ENCODE measurements at regions of chr4 and their contacts with region 1.

Region 1: DNA sequence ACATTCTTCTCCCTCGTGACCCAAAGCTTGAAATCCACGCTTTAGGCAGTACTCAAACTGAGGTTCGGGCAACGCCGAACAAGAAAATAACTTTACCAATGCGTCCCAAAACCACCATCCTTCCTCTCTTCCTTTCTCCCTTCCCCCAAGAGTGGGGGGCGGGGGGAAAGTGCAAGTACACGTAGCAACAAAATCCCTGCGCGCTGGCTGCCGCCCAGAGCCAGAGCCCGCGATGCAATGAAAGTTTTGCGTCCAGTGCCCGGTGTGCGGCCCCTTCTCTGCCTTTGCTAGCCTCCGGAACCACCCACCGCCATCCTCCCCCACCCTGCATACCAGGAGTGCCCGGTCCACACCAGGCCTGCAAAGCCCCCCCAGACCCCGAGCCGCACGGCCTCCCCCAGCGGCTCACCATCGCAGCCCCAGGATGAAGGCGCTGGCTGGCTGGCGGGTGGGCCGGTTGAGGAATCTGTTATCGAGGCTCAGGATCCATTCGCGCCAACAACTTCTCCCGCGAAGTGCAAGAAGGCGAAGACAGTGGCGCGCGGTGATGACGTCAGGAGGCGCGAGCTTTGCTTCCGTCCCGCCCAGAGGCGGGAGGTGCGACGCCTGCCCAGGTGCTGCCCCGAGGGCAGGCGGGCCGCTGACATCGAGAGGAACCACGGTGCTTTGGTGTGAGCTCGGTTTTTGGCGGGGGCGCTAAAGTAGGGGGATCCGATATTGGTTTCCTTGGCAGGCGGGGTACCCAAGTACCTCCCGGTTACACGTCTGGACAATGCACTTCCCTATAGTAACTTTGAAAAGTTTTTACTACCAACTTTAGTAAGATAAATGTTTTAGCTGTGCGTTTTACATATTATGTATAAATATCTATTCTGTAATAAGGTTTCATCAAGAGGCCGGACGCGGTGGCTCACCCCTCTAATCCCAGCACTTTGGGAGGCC is at the start of gene RFC1:
- DNase-seq: peak; percentile 84 to 92 (median 91)
- ATAC-seq: peak; percentile 98
- H3K4me3 ChIP-seq: peak within 1 kb of the TSS; percentile 69
- H3K4me3 Mint-ChIP-seq: peak within 1 kb of the TSS; percentile 88 to 98 (median 94)
- H3K27ac ChIP-seq: peak within 1 kb of the TSS; percentile 84
- H3K27ac Mint-ChIP-seq: peak within 1 kb of the TSS; percentile 72 to 97 (median 92)
- H3K4me1 ChIP-seq: peaks cover 12 to 19% of the 10 kb centered on the region in 2 donors
- H3K4me1 Mint-ChIP-seq: peaks cover 33 to 59% (median 41%) of the 10 kb centered on the region in 7 donors
- H3K27me3 ChIP-seq: no peaks in the 10 kb centered on the region
- H3K27me3 Mint-ChIP-seq: no peaks in the 10 kb centered on the region
- total RNA-seq, gene RFC1: 62.4 to 66.4 (median 64.3) TPM

Region 2: DNA sequence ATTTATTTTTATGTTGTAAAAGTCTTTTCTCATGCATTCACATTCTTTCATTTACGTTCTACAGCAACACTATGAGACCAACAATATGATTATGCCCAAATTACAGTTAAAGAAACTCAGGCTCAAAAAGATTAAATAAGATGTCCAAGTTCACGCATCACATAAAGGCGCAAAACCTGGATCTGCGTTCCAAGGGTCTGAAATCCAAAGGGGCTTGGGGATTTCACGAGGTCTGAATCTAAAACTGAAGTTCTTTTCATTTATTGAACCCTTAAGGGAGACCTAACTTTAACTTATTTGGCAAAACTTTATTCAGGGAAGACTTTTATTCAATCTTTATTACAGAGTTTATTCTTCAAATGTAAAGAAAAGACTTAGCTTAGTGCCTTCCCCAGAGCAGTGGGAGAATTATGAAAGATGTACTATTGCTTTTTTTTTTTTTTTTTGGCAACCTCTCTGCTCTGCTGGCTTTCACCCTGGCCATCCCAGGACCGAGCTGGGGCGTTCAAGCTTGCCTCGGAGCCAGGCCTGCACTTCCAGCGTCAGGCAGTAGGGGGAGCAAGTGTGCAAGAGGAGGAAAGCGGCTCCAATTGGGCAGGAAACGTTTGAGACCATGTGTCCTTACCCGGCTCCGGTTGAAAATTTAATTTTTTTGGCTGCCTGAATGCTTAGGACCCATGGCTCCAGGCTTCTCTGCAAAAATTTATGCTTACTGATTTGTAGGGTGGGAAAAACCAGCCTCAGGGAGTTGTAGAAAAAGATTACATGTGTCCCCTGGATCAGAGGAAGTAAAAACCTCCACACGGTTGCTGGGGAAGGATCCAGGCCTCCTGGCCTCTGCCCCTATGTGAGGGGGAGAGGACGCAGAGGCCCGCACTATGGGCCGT is 1046.4 kb before region 1 on chr4:
- CTCF ChIA-PET with region 1: no interaction called
- POLR2A ChIA-PET with region 1: no interaction called
- intact Hi-C with region 1: loop called in 1 of 2 experiments (anchors 10 kb)
- DNase-seq: peak; percentile 73 to 96 (median 83)
- ATAC-seq: peak; percentile 91
- H3K4me3 ChIP-seq: peak overlapping the region; percentile 38
- H3K4me3 Mint-ChIP-seq: peak overlapping the region; percentile 80 to 95 (median 88)
- H3K27ac ChIP-seq: peak overlapping the region; percentile 68
- H3K27ac Mint-ChIP-seq: peak overlapping the region; percentile 87 to 98 (median 94)
- H3K4me1 ChIP-seq: peaks cover 19 to 35% of the 10 kb centered on the region in 2 donors
- H3K4me1 Mint-ChIP-seq: peaks cover 33 to 75% (median 70%) of the 10 kb centered on the region in 7 donors
- H3K27me3 ChIP-seq: no peaks in the 10 kb centered on the region
- H3K27me3 Mint-ChIP-seq: peaks cover 0 to 10% (median 0%) of the 10 kb centered on the region in 5 donors

Region 3: GRCh38 chr4:39319678-39320077 is 46.4 kb before region 1 on chr4:
- CTCF ChIA-PET with region 1: no interaction called
- POLR2A ChIA-PET with region 1: interaction called, 4 read pairs
- intact Hi-C with region 1: loop called in 1 of 2 experiments (anchors 10 kb)
- DNase-seq: no peak
- ATAC-seq: no peak
- H3K4me3 ChIP-seq: no peak overlapping the region
- H3K4me3 Mint-ChIP-seq: no peak overlapping the region
- H3K27ac ChIP-seq: no peak overlapping the region
- H3K27ac Mint-ChIP-seq: no peak overlapping the region
- H3K4me1 ChIP-seq: no peaks in the 10 kb centered on the region
- H3K4me1 Mint-ChIP-seq: no peaks in the 10 kb centered on the region
- H3K27me3 ChIP-seq: no peaks in the 10 kb centered on the region
- H3K27me3 Mint-ChIP-seq: no peaks in the 10 kb centered on the region

Region 4: DNA sequence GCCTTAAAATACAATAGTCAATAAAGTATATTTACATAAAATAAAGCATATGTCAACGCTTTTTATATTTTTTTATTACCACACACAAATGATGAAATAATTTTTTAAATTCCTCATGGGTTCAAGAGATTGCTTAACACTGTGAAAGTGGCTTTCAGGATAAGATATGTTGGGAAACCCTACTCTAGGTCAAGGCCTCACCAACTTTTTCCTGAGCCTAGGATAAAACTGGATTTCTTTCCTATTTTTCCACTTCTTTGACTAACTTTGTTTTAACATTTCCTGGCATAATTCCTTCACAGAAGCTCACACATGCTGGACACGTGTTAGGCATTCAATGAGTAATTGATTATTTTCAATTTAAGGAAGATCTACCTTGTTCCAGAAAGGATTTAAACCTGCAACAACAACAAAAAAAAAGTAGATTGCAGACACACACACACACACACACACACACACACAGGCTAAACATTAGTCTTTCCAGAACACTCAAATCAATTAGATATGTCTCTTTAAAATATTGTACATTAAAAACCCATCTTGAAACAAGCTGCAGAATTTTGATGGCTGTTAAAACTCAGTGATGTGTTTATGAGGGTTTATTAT is 49.7 kb after region 1 on chr4:
- CTCF ChIA-PET with region 1: no interaction called
- POLR2A ChIA-PET with region 1: no interaction called
- intact Hi-C with region 1: no loop called
- DNase-seq: no peak
- ATAC-seq: no peak
- H3K4me3 ChIP-seq: no peak overlapping the region
- H3K4me3 Mint-ChIP-seq: no peak overlapping the region
- H3K27ac ChIP-seq: no peak overlapping the region
- H3K27ac Mint-ChIP-seq: no peak overlapping the region
- H3K4me1 ChIP-seq: no peaks in the 10 kb centered on the region
- H3K4me1 Mint-ChIP-seq: no peaks in the 10 kb centered on the region
- H3K27me3 ChIP-seq: peaks cover 0 to 2% of the 10 kb centered on the region in 2 donors
- H3K27me3 Mint-ChIP-seq: peaks cover 0 to 9% (median 0%) of the 10 kb centered on the region in 5 donors

Region 5: DNA sequence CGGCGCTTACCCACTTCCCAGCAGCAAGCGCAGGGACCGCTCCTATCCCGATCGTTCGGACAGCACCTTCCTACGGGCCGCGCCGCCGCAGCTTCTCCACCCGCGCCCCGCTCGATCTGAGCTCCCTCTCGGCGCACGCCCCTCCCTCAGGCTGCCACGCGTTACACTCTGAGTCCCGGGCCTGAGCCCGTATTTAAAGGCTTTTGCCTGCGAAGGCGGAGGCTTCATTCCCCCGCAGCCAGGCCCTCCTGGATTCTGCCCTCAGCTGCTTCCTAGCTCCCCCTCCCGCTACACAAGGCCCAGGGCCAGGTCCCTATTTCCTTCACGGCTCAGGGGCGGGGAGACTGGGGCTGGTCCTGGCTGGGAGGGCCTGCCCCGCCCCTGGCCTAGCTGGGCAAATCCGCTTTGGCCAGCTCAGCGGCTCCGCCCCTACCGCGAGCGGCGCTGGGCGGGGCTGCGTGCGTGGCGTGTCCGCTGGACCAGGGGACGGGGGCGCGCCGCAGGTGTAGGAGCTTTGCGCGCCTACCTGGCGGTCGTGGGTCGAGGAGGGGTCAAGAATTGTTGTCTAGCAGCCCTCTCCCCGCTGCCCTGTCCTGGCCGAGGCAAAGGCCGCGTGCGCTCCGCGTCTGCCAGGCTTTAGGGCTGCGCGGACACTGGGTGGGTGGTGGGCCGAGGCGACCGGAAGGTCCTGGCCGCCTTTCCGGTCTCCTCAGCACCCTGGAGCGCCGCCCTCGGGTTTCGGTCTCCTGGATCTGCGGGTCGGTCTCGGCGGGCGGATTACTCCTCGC is 161.4 kb after region 1 on chr4 and contains the start of gene UGDH:
- CTCF ChIA-PET with region 1: no interaction called
- POLR2A ChIA-PET with region 1: no interaction called
- intact Hi-C with region 1: loop called (anchors 5 to 10 kb)
- DNase-seq: peak; percentile 85 to 95 (median 88)
- ATAC-seq: peak; percentile 99
- H3K4me3 ChIP-seq: peak within 1 kb of the TSS; percentile 81
- H3K4me3 Mint-ChIP-seq: peak within 1 kb of the TSS; percentile 88 to 99 (median 98)
- H3K27ac ChIP-seq: peak within 1 kb of the TSS; percentile 74
- H3K27ac Mint-ChIP-seq: peak within 1 kb of the TSS; percentile 84 to 97 (median 93)
- H3K4me1 ChIP-seq: peaks cover 7 to 10% of the 10 kb centered on the region in 2 donors
- H3K4me1 Mint-ChIP-seq: peaks cover 11 to 26% (median 19%) of the 10 kb centered on the region in 7 donors
- H3K27me3 ChIP-seq: no peaks in the 10 kb centered on the region
- H3K27me3 Mint-ChIP-seq: no peaks in the 10 kb centered on the region
- total RNA-seq, gene UGDH: 6.9 to 20.9 (median 17.7) TPM

Region 6: DNA sequence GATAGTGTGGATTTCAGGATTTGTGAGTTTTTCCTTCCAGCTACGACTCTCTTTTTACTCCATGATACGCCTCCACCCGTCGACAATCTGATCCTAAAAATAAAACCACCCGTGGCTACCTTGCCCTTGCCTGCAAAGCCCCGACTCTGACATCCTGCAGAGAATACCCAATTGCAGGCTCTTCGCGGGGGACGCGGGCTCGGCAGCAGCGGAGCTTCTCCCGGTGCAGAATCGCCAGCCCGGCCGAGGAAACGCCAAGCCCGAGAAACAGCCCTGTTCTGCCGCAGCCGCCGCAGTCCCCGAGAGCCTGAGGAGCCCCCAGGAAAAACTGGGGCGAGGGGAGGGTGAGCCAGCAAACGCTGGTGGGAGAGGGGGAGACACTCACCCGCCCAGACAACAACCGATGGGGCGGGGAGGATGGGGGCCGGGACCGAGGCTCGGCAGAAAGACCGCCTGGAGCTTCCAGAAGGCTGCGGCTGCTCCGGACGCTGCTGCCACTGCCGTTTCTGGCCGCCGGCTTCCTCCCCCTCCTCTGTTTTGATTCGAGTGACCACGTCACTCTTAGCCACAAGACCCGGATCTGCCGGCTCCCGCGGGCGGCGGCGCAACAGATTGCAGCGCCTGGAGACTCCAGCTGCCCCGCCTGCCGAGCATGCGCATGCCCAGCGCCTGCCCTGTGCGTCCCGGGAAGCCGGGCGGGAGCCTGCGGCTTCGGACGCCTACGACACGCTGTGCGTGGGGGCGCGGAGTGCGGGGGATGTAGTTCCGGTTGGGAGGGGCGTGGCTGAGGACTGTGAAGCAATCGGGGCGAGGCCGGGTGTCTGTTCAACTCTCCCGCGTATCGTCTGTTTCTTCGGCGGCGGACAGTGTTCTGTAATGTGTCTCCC is 272.5 kb after region 1 on chr4 and contains the start of gene SMIM14:
- CTCF ChIA-PET with region 1: no interaction called
- POLR2A ChIA-PET with region 1: no interaction called
- intact Hi-C with region 1: loop called in 1 of 2 experiments (anchors 5 kb)
- DNase-seq: peak; percentile 69 to 96 (median 82)
- ATAC-seq: peak; percentile 92
- H3K4me3 ChIP-seq: peak within 1 kb of the TSS; percentile 77
- H3K4me3 Mint-ChIP-seq: peak within 1 kb of the TSS; percentile 86 to 97 (median 94)
- H3K27ac ChIP-seq: peak within 1 kb of the TSS; percentile 79
- H3K27ac Mint-ChIP-seq: peak within 1 kb of the TSS; percentile 67 to 96 (median 86)
- H3K4me1 ChIP-seq: peaks cover 12 to 13% of the 10 kb centered on the region in 2 donors
- H3K4me1 Mint-ChIP-seq: peaks cover 22 to 51% (median 44%) of the 10 kb centered on the region in 7 donors
- H3K27me3 ChIP-seq: no peaks in the 10 kb centered on the region
- H3K27me3 Mint-ChIP-seq: peaks cover 0 to 27% (median 0%) of the 10 kb centered on the region in 5 donors
- total RNA-seq, gene SMIM14: 4.6 to 15.1 (median 12.9) TPM

Region 7: DNA sequence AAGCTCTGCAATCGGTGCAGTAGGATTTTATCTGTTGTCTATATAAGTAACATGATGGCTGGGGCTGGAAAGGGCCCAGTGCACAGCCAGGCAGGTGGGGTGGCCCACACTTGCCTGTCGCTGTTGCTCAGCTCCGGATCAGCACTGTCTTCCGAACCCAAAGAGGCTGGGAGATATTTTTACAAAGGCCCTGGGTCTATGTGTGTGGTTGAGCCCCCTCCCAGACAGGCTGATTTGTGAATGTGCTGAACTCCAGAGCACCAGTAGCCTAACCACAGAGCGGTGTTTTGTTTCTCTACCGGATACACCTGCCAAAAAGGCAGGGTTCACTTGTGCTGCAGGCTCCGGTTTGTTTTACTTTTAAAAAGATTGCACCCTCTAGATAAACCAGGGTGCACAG is 935.5 kb after region 1 on chr4:
- CTCF ChIA-PET with region 1: no interaction called
- POLR2A ChIA-PET with region 1: no interaction called
- intact Hi-C with region 1: no loop called
- DNase-seq: peak in 8 of 9 donors; percentile 36 to 96 (median 92)
- ATAC-seq: peak; percentile 92
- H3K4me3 ChIP-seq: peak overlapping the region; percentile 17
- H3K4me3 Mint-ChIP-seq: peak overlapping the region; percentile 56 to 88 (median 76)
- H3K27ac ChIP-seq: peak overlapping the region; percentile 74
- H3K27ac Mint-ChIP-seq: peak overlapping the region in 8 of 9 donors; percentile 94 to 99 (median 98)
- H3K4me1 ChIP-seq: peaks cover 87 to 90% of the 10 kb centered on the region in 2 donors
- H3K4me1 Mint-ChIP-seq: peaks cover 60 to 92% (median 82%) of the 10 kb centered on the region in 7 donors
- H3K27me3 ChIP-seq: no peaks in the 10 kb centered on the region
- H3K27me3 Mint-ChIP-seq: no peaks in the 10 kb centered on the region

Measured in naive thymus-derived CD4-positive, alpha-beta T cell (primary cell).